ENCODE measurements at regions of chr12 and their contacts with region 1.

Region 1: DNA sequence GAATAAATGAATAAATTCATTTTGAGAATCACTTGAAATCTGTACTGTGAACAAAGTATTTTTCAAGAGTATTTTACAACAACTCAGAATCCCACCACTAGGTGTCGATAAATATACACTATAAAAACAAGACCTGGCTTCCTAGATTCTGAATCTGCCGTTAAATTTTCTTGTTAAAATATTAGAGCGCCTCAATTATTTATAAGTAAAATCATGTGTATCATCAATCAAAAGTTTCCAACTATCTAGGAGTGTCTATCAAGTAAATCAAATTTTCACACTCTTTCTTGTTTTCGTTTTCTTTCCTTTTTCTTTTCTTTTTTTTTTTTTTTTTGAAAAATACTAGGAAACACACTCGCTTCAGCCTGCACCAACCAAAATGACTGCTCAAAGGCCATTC is 179.2 kb upstream of the DCN start:
- DNase-seq: no peak
- ATAC-seq: 0 out of 2 replicates have a peak, but pooled peaks have one; percentile 58
- H3K4me3 ChIP-seq: no peak overlapping the region
- H3K27ac ChIP-seq: no peak overlapping the region
- H3K4me1 ChIP-seq: no peaks in the 10 kb centered on the region
- H3K27me3 ChIP-seq: peaks cover 8% of the 10 kb centered on the region
- CTCF ChIP-seq: peak; percentile 73; the same call in 1 of the 2 replicates

Region 2: DNA sequence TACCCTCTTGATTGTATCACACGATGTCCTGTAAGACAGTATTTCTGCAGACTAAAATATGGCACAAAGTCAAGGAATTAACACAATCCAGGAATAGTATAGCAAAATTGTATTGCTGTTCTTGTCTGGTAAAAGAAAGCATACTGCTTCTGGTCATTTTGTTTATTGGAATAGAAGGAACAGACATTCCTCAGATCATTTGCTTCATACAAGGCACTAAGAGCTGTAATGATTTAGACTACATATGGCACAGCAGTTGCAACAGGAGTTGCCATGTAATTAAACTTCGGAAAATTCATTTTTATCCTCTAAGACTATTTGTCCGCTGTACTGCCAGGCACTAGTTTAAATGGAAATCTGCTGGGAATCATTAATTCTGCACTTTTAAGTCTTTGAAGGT is 296.5 kb before region 1 on chr12:
- CTCF ChIA-PET with region 1: no interaction called
- POLR2A ChIA-PET with region 1: no interaction called
- in situ Hi-C with region 1: no loop called
- intact Hi-C with region 1: no loop called
- DNase-seq: no peak
- ATAC-seq: no peak
- H3K4me3 ChIP-seq: no peak overlapping the region
- H3K27ac ChIP-seq: no peak overlapping the region
- H3K4me1 ChIP-seq: no peaks in the 10 kb centered on the region
- H3K27me3 ChIP-seq: no peaks in the 10 kb centered on the region
- CTCF ChIP-seq: no peak

Region 3: GRCh38 chr12:91400271-91400670 is 38.4 kb after region 1 on chr12:
- CTCF ChIA-PET with region 1: no interaction called
- POLR2A ChIA-PET with region 1: no interaction called
- in situ Hi-C with region 1: no loop called
- intact Hi-C with region 1: no loop called
- DNase-seq: no peak
- ATAC-seq: no peak
- H3K4me3 ChIP-seq: no peak overlapping the region
- H3K27ac ChIP-seq: no peak overlapping the region
- H3K4me1 ChIP-seq: no peaks in the 10 kb centered on the region
- H3K27me3 ChIP-seq: no peaks in the 10 kb centered on the region
- CTCF ChIP-seq: no peak

Region 4: GRCh38 chr12:91413581-91414546 is 52.0 kb after region 1 on chr12:
- CTCF ChIA-PET with region 1: no interaction called
- POLR2A ChIA-PET with region 1: no interaction called
- in situ Hi-C with region 1: no loop called
- intact Hi-C with region 1: no loop called
- DNase-seq: no peak
- ATAC-seq: peak; percentile 17; the same call in 1 of the 2 replicates
- H3K4me3 ChIP-seq: no peak overlapping the region
- H3K27ac ChIP-seq: no peak overlapping the region
- H3K4me1 ChIP-seq: no peaks in the 10 kb centered on the region
- H3K27me3 ChIP-seq: no peaks in the 10 kb centered on the region
- CTCF ChIP-seq: no peak

Region 5: GRCh38 chr12:92570056-92570753 is 1208.3 kb after region 1 on chr12:
- CTCF ChIA-PET with region 1: no interaction called
- POLR2A ChIA-PET with region 1: no interaction called
- in situ Hi-C with region 1: no loop called
- intact Hi-C with region 1: loop called (anchors 5 kb)
- DNase-seq: peak; percentile 41
- ATAC-seq: peak; percentile 80
- H3K4me3 ChIP-seq: no peak overlapping the region
- H3K27ac ChIP-seq: no peak overlapping the region
- H3K4me1 ChIP-seq: no peaks in the 10 kb centered on the region
- H3K27me3 ChIP-seq: 0 out of 2 replicates have a peak, but pooled peaks cover 2% of the 10 kb centered on the region
- CTCF ChIP-seq: peak; percentile 70

Region 6: DNA sequence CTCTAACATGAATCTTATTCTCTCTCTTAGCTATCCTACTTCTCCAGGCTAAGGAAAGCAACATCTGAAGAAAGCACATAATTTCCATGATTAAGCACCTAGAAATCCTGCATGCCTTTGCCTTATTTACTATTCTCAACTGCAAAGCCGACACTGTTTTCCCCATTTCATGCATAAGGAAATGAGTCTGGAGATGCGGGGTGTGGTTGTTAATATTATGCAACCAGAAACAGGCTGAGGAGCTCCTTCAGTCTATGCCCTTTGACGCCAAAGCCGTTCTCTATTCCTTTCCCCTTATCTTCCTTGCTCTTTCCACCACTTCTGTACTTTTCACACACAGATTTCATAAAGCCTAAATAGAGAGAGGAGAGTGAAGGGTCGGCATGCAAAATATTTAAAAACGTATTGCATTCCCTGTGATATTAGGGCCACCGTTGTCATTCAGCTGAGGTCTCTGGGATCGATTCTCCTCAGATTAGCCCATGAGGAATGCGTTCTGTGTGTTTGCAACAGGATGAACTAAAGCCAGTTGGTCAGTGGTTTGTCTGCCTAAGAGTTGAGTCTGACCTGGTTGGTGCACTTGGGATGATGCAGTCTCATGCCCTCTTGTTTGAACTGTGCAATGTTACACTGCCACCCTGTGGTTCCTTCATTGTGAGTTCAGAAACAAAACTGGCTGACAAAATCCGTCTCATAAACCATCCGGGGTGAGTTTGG is 1287.8 kb after region 1 on chr12:
- CTCF ChIA-PET with region 1: no interaction called
- POLR2A ChIA-PET with region 1: no interaction called
- in situ Hi-C with region 1: no loop called
- intact Hi-C with region 1: loop called (anchors 5 kb)
- DNase-seq: peak; percentile 61
- ATAC-seq: peak; percentile 95
- H3K4me3 ChIP-seq: no peak overlapping the region
- H3K27ac ChIP-seq: no peak overlapping the region
- H3K4me1 ChIP-seq: no peaks in the 10 kb centered on the region
- H3K27me3 ChIP-seq: peaks cover 4% of the 10 kb centered on the region; the same call in 1 of the 2 replicates
- CTCF ChIP-seq: peak; percentile 80

Measured in Panc1 (cell line).